ENCODE measurements at regions of chr5 and their contacts with region 1.

Region 1: GRCh38 chr5:10856683-10857337 is 95.8 kb upstream of the DAP start:
- DNase-seq: no peak
- ATAC-seq: no peak

Region 2: GRCh38 chr5:11110128-11110527 is 253.3 kb after region 1 on chr5:
- intact Hi-C with region 1: loop called (anchors 5 kb)
- DNase-seq: no peak
- ATAC-seq: no peak